ENCODE measurements at regions of chr2 and their contacts with region 1.

Region 1: DNA sequence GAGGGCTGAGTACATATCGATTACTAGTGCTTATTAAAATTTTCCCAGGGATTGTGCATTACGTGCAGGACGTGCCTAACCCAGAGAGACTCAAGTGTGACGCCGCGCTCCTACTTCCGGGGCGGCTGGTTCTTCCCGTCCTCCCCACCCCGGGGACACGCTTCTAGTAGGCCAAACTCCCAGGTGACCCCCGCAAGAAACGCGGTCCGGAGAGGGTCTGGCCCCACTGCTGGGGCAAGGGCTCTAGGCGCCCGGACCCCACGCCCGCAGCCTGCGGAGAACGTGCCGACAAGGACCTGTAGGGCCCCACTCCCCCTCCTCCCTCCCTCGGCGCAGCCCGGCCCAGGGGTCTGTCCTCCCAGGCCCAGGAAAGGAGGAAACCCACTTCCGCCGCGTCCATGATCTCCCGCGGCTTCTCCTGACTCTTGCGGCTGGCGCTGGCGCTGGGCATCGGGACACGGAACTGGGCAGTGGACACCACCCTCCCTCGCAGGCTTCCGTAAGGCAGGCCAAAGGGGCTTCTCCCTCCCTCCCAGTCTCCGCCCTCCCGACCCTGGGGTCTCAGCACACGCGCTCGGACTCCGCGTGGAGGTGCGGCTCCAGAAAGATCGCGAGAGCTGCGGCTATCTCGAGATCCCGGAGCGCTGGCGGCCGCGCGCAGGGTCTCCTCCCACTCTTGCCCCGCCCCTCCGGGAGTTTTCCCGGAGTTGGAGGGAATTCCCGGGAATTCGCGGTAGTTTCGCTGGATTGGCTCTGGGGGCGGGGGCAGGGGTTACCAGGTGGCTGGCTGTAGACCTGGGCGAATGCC is at the start of gene DARS1:
- DNase-seq: peak; percentile 95
- H3K4me3 ChIP-seq: peak within 1 kb of the TSS; percentile 78 to 96 (median 87)
- H3K27ac ChIP-seq: peak within 1 kb of the TSS; percentile 86 to 99 (median 90)
- H3K4me1 ChIP-seq: peaks cover 0 to 39% (median 17%) of the 10 kb centered on the region in 4 donors
- H3K27me3 ChIP-seq: no peaks in the 10 kb centered on the region
- CTCF ChIP-seq: no peak
- EP300 ChIP-seq: peak in 1 of 4 donors; percentile 38
- POLR2A ChIP-seq: peak; percentile 40 to 58
- total RNA-seq, gene DARS1: 77.3 to 95.6 (median 81.5) TPM

Region 2: GRCh38 chr2:135585586-135585985 is 399.6 kb before region 1 on chr2:
- intact Hi-C with region 1: no loop called
- DNase-seq: no peak
- H3K4me3 ChIP-seq: no peak overlapping the region
- H3K27ac ChIP-seq: no peak overlapping the region
- H3K4me1 ChIP-seq: peaks cover 0 to 8% (median 0%) of the 10 kb centered on the region in 4 donors
- H3K27me3 ChIP-seq: no peaks in the 10 kb centered on the region
- CTCF ChIP-seq: no peak
- EP300 ChIP-seq: no peak
- POLR2A ChIP-seq: no peak

Region 3: DNA sequence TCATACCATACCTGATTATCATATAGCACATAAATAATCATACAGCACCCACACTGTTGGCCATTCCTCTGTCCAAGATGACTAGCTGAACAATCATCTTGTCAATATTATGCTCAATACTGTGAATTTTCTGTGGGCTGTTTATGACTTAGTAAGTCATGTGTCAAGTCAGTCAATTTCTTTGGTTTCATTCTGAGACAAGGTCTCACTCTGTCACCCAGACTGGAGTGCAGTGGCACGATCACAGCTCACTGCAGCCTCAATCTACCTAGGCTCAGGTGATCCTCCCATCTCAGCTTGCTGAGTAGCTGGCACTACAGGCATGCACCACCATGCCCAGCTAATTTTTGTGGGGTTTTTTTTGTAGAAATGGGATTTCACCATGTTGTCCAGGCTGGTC is 114.7 kb before region 1 on chr2:
- intact Hi-C with region 1: loop called (anchors 5 kb)
- DNase-seq: no peak
- H3K4me3 ChIP-seq: no peak overlapping the region
- H3K27ac ChIP-seq: no peak overlapping the region
- H3K4me1 ChIP-seq: peaks cover 0 to 11% (median 7%) of the 10 kb centered on the region in 4 donors
- H3K27me3 ChIP-seq: no peaks in the 10 kb centered on the region
- CTCF ChIP-seq: no peak
- EP300 ChIP-seq: no peak
- POLR2A ChIP-seq: no peak